GM12878 (cell line): ENCODE measurements at regions of chr17 and their contacts with region 1.

Region 1: DNA sequence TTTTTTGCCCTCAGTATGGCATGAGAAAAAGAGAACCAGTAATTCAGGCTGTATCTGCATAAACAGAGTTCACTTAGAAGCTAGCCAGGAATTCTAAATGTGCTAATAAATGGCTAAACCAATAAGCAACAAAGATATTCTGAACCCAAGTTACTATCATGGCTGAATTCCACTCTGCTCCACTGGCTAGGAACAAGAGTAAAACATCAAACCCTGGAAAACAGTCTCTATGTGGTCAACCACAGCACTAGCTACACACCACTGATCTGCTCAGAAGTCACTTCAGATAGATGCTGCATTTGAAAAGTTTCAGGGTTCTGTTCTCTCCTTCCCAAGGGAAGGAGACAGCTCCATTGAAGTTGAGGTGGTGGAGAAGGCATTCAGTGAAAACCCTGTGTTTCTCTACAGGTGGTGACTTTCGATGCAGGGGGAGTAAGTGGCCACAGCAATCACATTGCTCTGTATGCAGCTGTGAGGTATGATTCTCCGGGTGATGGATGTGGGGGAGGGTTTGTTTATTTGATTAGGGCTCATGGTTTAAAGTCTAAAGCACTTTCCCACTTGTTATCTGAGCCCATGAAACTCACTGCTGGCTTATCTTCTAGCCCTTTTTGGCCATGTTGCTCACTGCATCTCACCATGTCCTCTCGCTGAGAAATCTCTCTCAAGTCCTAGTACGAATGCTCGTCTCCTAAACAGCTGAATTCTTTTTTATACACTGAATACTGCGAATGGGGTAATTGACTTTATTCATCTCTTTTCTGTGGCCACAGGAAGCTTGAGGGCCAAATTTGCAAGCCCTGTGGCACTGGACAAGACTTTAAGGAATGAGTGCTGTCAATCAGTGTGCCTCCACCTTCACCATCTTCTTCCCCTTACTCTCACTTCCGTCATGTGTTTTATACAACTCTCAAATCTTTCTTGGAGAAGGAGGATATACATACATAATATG is 39.9 kb downstream of the CENPV start:
- DNase-seq: no peak
- ATAC-seq: no peak
- H3K4me3 ChIP-seq: no peak overlapping the region
- H3K27ac ChIP-seq: no peak overlapping the region
- H3K4me1 ChIP-seq: no peaks in the 10 kb centered on the region
- H3K27me3 ChIP-seq: no peaks in the 10 kb centered on the region
- CTCF ChIP-seq: no peak
- EP300 ChIP-seq: no peak
- POLR2A ChIP-seq: no peak
- RAD21 ChIP-seq: no peak

Region 2: DNA sequence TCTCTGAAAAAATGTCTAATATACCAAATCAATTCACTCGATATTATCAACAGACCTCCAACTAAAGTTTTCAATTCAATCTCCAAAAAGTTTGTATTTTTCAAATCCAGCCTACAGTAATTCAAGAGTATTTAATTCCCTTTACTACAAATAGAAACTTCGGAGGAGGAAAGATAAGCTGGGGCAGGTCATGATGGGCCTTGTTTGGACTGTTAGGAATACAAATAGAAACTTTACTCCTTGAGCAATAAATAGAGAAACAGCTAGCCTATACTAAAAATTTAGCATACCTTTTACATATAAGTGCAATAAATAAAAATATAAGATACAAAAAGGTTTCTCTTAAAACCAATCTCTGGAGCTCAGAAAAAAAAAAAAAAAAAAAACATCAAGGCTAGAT is 196.3 kb before region 1 on chr17:
- CTCF ChIA-PET with region 1: no interaction called
- POLR2A ChIA-PET with region 1: no interaction called
- RAD21 ChIA-PET with region 1: no interaction called
- SMC1A ChIA-PET with region 1: no interaction called
- in situ Hi-C with region 1: no loop called
- intact Hi-C with region 1: no loop called
- DNase-seq: no peak
- ATAC-seq: no peak
- H3K4me3 ChIP-seq: no peak overlapping the region
- H3K27ac ChIP-seq: no peak overlapping the region
- H3K4me1 ChIP-seq: no peaks in the 10 kb centered on the region
- H3K27me3 ChIP-seq: no peaks in the 10 kb centered on the region
- CTCF ChIP-seq: no peak
- EP300 ChIP-seq: no peak
- POLR2A ChIP-seq: no peak
- RAD21 ChIP-seq: no peak

Region 3: GRCh38 chr17:16243811-16244567 is 69.4 kb before region 1 on chr17:
- CTCF ChIA-PET with region 1: no interaction called
- POLR2A ChIA-PET with region 1: interaction called, 10 read pairs
- RAD21 ChIA-PET with region 1: no interaction called
- SMC1A ChIA-PET with region 1: no interaction called
- in situ Hi-C with region 1: no loop called
- intact Hi-C with region 1: no loop called
- DNase-seq: no peak
- ATAC-seq: no peak
- H3K4me3 ChIP-seq: no peak overlapping the region
- H3K27ac ChIP-seq: no peak overlapping the region
- H3K4me1 ChIP-seq: peaks cover 6% of the 10 kb centered on the region
- H3K27me3 ChIP-seq: no peaks in the 10 kb centered on the region
- CTCF ChIP-seq: no peak
- EP300 ChIP-seq: no peak
- POLR2A ChIP-seq: no peak
- RAD21 ChIP-seq: no peak

Region 4: GRCh38 chr17:16486373-16487250 is 173.2 kb after region 1 on chr17:
- CTCF ChIA-PET with region 1: no interaction called
- POLR2A ChIA-PET with region 1: no interaction called
- RAD21 ChIA-PET with region 1: no interaction called
- SMC1A ChIA-PET with region 1: no interaction called
- in situ Hi-C with region 1: no loop called
- intact Hi-C with region 1: no loop called
- DNase-seq: no peak
- ATAC-seq: no peak
- H3K4me3 ChIP-seq: no peak overlapping the region
- H3K27ac ChIP-seq: no peak overlapping the region
- H3K4me1 ChIP-seq: no peaks in the 10 kb centered on the region
- H3K27me3 ChIP-seq: peaks cover 0 to 6% of the 10 kb centered on the region in 2 experiments; a peak in 2 of 4 replicates
- CTCF ChIP-seq: no peak
- EP300 ChIP-seq: no peak
- POLR2A ChIP-seq: no peak
- RAD21 ChIP-seq: no peak

Region 5: DNA sequence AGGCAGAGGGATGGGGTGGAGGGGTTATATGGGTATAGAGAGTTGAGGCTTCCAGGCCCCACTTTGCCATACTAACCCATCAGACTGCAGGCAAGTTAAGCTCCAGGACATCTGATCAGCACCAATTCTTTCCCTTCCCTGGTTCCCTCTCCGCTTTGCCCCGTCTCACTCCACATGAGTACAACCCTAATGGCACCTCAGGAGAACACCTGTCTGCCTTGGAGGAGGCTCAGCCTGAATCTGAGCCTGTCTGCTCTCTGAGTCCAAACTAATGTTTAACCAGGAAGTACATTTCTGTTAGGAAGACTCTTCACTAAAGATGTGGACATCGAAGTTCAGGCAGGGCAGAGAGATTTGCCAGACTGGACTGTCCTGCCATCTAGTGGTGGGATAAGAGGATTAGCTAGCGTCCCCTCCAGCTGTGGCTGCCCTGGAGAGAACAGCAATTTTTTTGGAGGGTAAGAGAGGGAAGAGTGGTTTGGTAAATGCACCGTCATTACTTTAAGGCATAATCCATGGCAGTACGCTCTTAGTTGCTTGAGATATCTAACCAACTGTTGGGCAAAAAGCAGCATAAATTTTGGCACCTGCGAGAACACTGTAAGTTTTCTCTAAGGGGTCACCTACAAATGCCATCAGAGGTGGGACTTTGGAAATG is 207.8 kb after region 1 on chr17:
- CTCF ChIA-PET with region 1: no interaction called
- POLR2A ChIA-PET with region 1: no interaction called
- RAD21 ChIA-PET with region 1: no interaction called
- SMC1A ChIA-PET with region 1: no interaction called
- in situ Hi-C with region 1: no loop called
- intact Hi-C with region 1: no loop called
- DNase-seq: peak; percentile 39
- ATAC-seq: peak; percentile 98
- H3K4me3 ChIP-seq: no peak overlapping the region
- H3K27ac ChIP-seq: no peak overlapping the region
- H3K4me1 ChIP-seq: 0 out of 2 replicates have a peak, but pooled peaks cover 2% of the 10 kb centered on the region
- H3K27me3 ChIP-seq: no peaks in the 10 kb centered on the region
- CTCF ChIP-seq: peak; percentile 89 to 97 (median 94)
- EP300 ChIP-seq: no peak
- POLR2A ChIP-seq: no peak
- RAD21 ChIP-seq: peak; percentile 91